ENCODE measurements at regions of chr9 and their contacts with region 1.

Region 1: DNA sequence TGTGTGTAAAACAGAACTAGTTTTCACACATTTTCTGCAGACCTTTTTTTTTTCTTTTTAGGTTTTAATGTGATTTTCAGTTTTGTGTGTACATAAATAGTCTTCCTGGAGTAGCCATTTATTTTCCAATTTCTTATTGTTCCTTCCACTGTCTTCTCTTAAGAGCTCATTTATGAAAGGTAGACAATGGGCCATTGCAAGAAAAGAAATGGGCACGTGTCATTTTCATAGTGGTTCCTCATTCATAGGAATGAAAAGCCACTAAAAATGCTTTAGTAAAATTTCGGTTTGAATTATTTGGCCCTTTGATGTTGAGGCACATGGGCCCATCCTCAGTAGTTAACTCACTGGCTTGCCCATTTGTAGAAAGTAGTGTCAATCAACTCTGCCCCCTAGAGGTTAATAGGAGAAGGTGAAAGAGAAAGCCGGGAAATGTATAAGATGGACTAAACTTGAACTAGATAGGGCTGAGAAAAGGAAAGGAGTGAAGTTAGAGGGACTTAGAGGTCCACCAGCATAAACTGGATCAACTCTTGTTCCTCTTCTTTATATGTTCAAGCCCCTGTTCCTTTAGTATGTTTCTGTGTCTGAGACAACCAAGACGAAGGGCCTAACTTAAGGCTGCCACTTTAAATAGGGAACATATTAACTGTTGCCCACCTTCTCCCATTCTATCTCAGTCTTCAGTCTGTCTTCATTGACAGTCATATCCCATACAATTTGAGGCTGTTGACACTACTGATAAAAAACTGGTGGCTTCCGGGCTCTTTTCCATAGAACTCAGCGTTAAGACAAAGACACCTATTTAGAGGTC is 72.6 kb downstream of the SMARCA2 start:
- DNase-seq: no peak
- H3K4me3 ChIP-seq: no peak overlapping the region
- H3K27ac ChIP-seq: no peak overlapping the region
- H3K4me1 ChIP-seq: no peaks in the 10 kb centered on the region
- H3K27me3 ChIP-seq: no peaks in the 10 kb centered on the region
- CTCF ChIP-seq: peak; percentile 58 to 72 (median 64)
- EP300 ChIP-seq: no peak
- POLR2A ChIP-seq: no peak

Region 2: DNA sequence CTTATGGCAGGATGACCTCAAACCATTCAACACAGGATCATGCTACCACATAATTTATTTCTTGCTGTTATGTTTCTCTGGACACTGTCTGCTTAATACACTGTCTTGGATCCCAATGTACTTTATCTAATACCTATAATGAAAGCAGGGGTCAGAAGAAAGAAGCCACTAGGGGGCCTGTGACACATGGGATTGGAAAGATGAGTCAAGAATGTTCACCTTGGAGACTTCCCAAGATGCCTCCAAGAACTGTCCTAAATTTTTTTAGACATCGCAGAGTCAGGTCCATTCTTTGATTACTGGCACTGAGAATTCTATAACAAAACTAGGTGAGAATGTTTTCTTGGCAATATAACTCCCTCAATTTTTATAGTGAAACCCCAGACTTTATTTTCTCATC is 378.4 kb before region 1 on chr9:
- in situ Hi-C with region 1: loop called in 2 of 4 experiments (anchors 25 kb)
- intact Hi-C with region 1: no loop called
- DNase-seq: no peak
- H3K4me3 ChIP-seq: no peak overlapping the region
- H3K27ac ChIP-seq: no peak overlapping the region
- H3K4me1 ChIP-seq: no peaks in the 10 kb centered on the region
- H3K27me3 ChIP-seq: peaks cover 5% of the 10 kb centered on the region
- CTCF ChIP-seq: peak in 3 of 5 experiments; percentile 13 to 25 (median 16)
- EP300 ChIP-seq: no peak
- POLR2A ChIP-seq: no peak

Region 3: GRCh38 chr9:1939926-1940368 is 147.8 kb before region 1 on chr9:
- in situ Hi-C with region 1: loop called in 1 of 4 experiments (anchors 25 kb)
- intact Hi-C with region 1: no loop called
- DNase-seq: peak; percentile 22
- H3K4me3 ChIP-seq: no peak overlapping the region
- H3K27ac ChIP-seq: no peak overlapping the region
- H3K4me1 ChIP-seq: no peaks in the 10 kb centered on the region
- H3K27me3 ChIP-seq: no peaks in the 10 kb centered on the region
- CTCF ChIP-seq: peak in 4 of 5 experiments; percentile 29 to 57 (median 48)
- EP300 ChIP-seq: no peak
- POLR2A ChIP-seq: no peak

Region 4: DNA sequence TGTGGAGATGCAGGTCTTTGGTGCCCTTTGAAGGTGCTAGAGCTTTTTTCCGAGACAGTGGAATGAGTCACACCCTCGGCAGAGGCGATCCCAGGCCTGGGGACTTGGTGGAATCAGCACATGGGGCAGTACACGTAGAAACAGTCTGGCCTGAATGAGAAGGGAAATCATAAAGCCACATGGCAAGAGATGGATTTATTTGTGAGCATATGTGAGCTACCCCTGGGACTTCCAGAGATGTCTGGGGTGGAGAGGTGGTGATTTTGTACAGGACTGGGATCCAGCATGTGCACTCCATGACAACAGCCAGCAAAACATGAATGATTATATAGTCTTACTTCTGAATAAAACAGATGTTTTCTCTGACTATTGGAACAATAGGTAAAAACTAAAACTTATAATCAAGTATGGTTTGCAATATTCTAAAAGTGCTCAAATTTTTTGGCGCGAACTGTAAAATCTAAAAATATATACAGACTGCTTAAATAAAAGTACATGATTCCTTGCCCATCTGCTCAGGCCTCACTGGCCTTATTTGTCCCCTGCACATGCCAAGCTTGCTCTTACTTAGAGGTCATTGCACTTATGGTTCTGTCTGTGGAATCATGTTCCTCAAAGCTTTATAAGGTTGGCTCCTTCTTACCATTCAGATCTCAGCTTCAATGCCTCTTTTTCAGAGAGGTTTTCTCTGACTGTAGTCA is 127.2 kb before region 1 on chr9:
- in situ Hi-C with region 1: no loop called
- intact Hi-C with region 1: no loop called
- DNase-seq: no peak
- H3K4me3 ChIP-seq: no peak overlapping the region
- H3K27ac ChIP-seq: no peak overlapping the region
- H3K4me1 ChIP-seq: peaks cover 0 to 11% (median 3%) of the 10 kb centered on the region in 4 donors
- H3K27me3 ChIP-seq: no peaks in the 10 kb centered on the region
- CTCF ChIP-seq: no peak
- EP300 ChIP-seq: no peak
- POLR2A ChIP-seq: no peak